ENCODE measurements at regions of chr18 and their contacts with region 1.

Region 1: DNA sequence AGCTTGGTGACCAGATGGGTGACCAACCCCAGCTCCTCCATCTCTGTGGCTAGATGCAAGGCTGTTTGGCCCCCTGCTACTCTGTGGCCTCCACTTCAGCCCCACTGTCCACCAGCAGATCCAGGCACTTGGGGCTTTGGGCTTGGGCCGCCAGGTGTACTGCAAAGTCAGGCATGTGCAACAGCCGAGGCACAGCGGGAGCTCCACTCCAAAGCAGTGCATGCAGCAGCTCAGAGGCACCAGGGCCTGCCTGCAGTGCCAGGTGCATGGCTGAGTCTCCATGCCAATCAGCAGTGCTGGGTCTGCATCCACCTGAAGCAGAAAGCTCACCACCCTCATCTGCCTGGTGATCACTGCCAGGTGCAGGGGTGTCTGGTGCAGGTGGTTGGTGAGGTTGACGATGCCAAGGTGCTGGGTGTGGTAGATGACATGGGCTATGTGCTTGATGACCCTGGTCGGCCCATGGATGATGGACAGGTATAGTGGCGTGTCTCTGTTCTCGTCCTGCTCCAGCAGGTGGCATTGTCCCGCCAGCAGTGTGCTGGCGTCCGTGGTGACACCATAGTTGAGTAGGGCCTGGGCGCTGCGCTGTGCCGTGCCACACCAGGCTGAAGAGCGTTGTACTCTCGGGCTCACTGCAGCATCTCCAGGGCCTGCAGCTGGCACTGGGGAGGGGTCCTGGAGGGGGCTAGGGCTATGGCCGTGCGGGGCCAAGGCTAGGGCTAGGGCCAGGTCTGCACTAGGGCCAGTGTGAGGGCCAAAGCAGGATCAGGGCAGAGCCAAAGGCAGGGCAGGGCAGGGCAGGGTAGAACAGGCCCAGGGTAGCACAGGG is 1.0 kb upstream of the ANKRD62 start:
- DNase-seq: peak; percentile 5
- ATAC-seq: peak; percentile 94
- H3K4me3 ChIP-seq: no peak overlapping the region
- H3K27ac ChIP-seq: no peak overlapping the region
- H3K4me1 ChIP-seq: no peaks in the 10 kb centered on the region
- H3K27me3 ChIP-seq: no peaks in the 10 kb centered on the region
- CTCF ChIP-seq: peak; percentile 49 to 60 (median 49); a peak in 5 of 6 replicates
- EP300 ChIP-seq: no peak
- POLR2A ChIP-seq: no peak
- RAD21 ChIP-seq: peak; percentile 67

Region 2: DNA sequence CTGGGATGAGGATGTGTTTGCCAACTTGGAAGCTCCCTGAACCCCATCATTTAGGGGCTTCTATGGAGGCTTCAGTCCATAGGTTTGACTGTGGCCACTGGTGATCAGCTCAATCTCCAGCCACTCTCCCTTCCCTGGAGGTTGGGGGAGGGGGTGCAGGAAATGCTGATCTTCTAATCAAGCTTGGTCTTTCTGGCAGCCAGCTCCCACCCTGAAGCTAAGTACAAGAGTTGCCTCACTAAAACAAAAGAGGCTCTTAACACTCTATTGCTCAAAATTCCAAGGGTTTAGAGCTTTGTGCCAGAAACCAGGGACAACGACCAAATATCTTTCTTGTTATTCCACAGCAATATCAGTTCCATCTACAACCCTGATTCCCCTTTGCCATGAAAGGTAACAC is 165.1 kb before region 1 on chr18:
- CTCF ChIA-PET with region 1: no interaction called
- POLR2A ChIA-PET with region 1: no interaction called
- RAD21 ChIA-PET with region 1: no interaction called
- SMC1A ChIA-PET with region 1: no interaction called
- in situ Hi-C with region 1: no loop called
- intact Hi-C with region 1: no loop called
- DNase-seq: no peak
- ATAC-seq: no peak
- H3K4me3 ChIP-seq: no peak overlapping the region
- H3K27ac ChIP-seq: no peak overlapping the region
- H3K4me1 ChIP-seq: no peaks in the 10 kb centered on the region
- H3K27me3 ChIP-seq: no peaks in the 10 kb centered on the region
- CTCF ChIP-seq: no peak
- EP300 ChIP-seq: no peak
- POLR2A ChIP-seq: no peak
- RAD21 ChIP-seq: no peak

Region 3: GRCh38 chr18:12121175-12122042 is 28.8 kb after region 1 on chr18:
- CTCF ChIA-PET with region 1: no interaction called
- POLR2A ChIA-PET with region 1: no interaction called
- RAD21 ChIA-PET with region 1: no interaction called
- SMC1A ChIA-PET with region 1: no interaction called
- in situ Hi-C with region 1: no loop called
- intact Hi-C with region 1: no loop called
- DNase-seq: no peak
- ATAC-seq: no peak
- H3K4me3 ChIP-seq: no peak overlapping the region
- H3K27ac ChIP-seq: no peak overlapping the region
- H3K4me1 ChIP-seq: no peaks in the 10 kb centered on the region
- H3K27me3 ChIP-seq: no peaks in the 10 kb centered on the region; a peak in 1 of 4 replicates
- CTCF ChIP-seq: peak in 1 of 3 experiments; percentile 24; a peak in 1 of 6 replicates
- EP300 ChIP-seq: no peak
- POLR2A ChIP-seq: no peak
- RAD21 ChIP-seq: no peak

Region 4: GRCh38 chr18:12159447-12159846 is 66.8 kb after region 1 on chr18:
- CTCF ChIA-PET with region 1: no interaction called
- POLR2A ChIA-PET with region 1: no interaction called
- RAD21 ChIA-PET with region 1: no interaction called
- SMC1A ChIA-PET with region 1: no interaction called
- in situ Hi-C with region 1: no loop called
- intact Hi-C with region 1: no loop called
- DNase-seq: no peak
- ATAC-seq: no peak
- H3K4me3 ChIP-seq: no peak overlapping the region
- H3K27ac ChIP-seq: no peak overlapping the region
- H3K4me1 ChIP-seq: no peaks in the 10 kb centered on the region
- H3K27me3 ChIP-seq: no peaks in the 10 kb centered on the region
- CTCF ChIP-seq: no peak
- EP300 ChIP-seq: no peak
- POLR2A ChIP-seq: no peak
- RAD21 ChIP-seq: no peak

Region 5: GRCh38 chr18:12236934-12237832 is 144.6 kb after region 1 on chr18:
- CTCF ChIA-PET with region 1: interaction called, 6 read pairs
- POLR2A ChIA-PET with region 1: no interaction called
- RAD21 ChIA-PET with region 1: interaction called, 5 read pairs
- SMC1A ChIA-PET with region 1: no interaction called
- in situ Hi-C with region 1: loop called (anchors 10 kb)
- intact Hi-C with region 1: loop called (anchors 1 kb)
- DNase-seq: no peak
- ATAC-seq: peak; percentile 100
- H3K4me3 ChIP-seq: no peak overlapping the region
- H3K27ac ChIP-seq: no peak overlapping the region
- H3K4me1 ChIP-seq: peaks cover 3% of the 10 kb centered on the region; the same call in 1 of the 2 replicates
- H3K27me3 ChIP-seq: no peaks in the 10 kb centered on the region; a peak in 1 of 4 replicates
- CTCF ChIP-seq: peak; percentile 83 to 90 (median 90)
- EP300 ChIP-seq: no peak
- POLR2A ChIP-seq: no peak
- RAD21 ChIP-seq: peak; percentile 68

Region 6: DNA sequence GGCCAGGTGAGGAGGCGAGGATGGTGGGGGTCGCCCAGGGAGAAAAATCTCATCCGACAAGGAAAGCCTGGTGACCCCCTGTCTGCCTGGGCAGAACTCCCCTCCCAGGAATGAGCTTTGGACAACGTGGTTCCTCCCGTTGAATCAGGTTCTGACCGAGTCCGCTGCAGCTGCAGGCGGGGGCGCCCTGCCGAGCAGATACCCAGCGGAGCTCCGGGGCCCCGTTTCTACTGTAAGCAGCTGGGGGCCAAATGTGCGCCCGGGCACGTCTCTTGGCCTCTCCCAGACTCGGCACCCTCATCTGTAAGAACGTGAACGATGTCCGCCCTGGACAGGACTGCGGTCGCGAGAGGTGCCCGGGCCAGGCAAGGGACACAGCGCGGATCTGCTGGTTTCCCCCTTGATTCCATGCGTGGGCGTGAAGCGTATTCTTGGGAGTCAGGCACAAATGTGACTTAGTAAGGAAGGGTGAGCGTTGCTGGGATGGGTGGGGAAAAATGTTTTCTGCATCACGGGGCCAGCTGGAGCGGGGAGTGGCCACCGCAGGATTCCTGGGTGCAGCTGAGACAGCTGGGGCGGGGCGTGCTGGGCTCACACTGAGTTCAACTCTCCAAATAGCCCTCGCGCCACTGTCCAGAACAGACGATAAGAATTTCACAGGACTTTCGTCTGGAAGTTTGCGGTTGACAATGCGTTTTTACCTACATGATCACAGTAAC is 195.2 kb after region 1 on chr18:
- CTCF ChIA-PET with region 1: no interaction called
- POLR2A ChIA-PET with region 1: no interaction called
- RAD21 ChIA-PET with region 1: no interaction called
- SMC1A ChIA-PET with region 1: no interaction called
- in situ Hi-C with region 1: no loop called
- intact Hi-C with region 1: no loop called
- DNase-seq: no peak
- ATAC-seq: no peak
- H3K4me3 ChIP-seq: no peak overlapping the region
- H3K27ac ChIP-seq: no peak overlapping the region
- H3K4me1 ChIP-seq: no peaks in the 10 kb centered on the region
- H3K27me3 ChIP-seq: peaks cover 7% of the 10 kb centered on the region in 2 experiments; a peak in 3 of 4 replicates
- CTCF ChIP-seq: no peak
- EP300 ChIP-seq: no peak
- POLR2A ChIP-seq: no peak
- RAD21 ChIP-seq: no peak

Measured in GM12878 (cell line).